GM18951 (cell line): ENCODE measurements at regions of chr12 and their contacts with region 1.

Region 1: GRCh38 chr12:56521590-56522371 is at the start of gene RBMS2:
- POLR2A ChIP-seq: no peak

Region 2: DNA sequence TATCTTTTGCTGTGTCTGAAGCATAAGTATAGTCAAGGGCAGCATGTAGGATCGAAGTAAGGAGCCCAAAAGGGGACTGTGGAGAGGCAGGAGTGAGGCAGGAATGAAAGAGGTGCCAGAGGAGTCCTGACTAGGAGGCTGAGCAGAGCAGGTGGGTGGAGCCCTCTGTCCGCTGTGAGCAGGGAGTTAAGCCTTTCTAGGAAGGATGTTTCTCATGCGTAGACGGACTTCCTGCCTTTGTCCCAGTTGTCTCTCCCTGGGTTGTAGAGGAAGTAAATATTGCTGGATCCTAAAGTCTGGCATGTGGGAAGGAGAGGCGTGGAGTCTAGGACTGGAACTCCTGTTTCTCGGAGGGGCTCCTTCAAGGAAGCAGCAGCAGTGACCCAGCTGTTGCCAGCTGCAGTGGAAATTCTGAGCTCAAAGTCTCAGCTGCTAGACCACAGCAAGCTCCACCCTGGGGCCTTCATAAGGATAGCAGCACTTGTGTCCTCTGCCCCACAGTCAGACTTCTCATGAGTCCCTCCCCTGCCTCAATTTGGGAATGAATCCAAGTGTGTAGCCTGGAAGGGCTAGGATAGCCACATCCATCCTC is 43.8 kb after region 1 on chr12:
- in situ Hi-C with region 1: loop called (anchors 10 kb)
- POLR2A ChIP-seq: no peak